ENCODE measurements at regions of chr10 and their contacts with region 1.

Region 1: DNA sequence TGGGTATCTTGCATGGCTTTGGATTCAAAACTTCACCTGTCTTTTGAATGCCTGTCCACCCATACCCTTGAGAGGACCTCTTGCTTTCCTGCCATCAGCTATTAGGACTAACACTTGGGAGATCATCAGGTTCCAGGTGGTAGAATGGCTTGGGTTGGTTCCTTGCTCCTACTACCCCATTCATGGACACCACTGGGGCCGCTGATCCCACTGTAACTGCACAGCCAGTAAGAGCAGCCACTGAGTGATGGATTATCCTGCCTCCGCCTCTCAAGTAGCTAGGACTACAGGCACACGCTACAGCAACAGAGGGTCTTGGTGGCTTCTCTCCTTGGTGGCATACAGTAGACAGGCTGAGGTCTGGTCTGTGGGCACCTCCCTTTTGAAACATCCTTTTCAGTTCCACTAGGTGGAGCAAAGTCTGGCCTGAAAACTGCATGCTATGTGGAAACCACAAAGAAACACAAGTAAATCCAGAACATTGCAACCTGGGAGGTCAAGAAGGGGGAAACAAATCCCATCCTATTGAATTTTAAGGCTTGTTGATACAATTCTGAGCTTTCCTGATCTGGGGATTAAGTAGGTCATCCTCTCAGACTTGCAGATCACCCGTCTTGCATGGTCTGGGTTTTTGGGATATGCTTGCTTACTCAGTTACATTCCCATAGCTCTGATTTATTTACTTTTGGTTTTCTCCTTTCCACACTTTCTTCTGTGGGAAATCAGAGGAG is 9.4 kb downstream of the WBP1L start:
- DNase-seq: peak; percentile 19
- ATAC-seq: peak; percentile 95
- H3K4me3 ChIP-seq: no peak overlapping the region
- H3K27ac ChIP-seq: no peak overlapping the region
- H3K4me1 ChIP-seq: peaks cover 11% of the 10 kb centered on the region
- H3K27me3 ChIP-seq: no peaks in the 10 kb centered on the region
- CTCF ChIP-seq: peak; percentile 54 to 63 (median 57); a peak in 5 of 6 replicates
- EP300 ChIP-seq: no peak
- POLR2A ChIP-seq: no peak
- RAD21 ChIP-seq: peak; percentile 71

Region 2: GRCh38 chr10:102024799-102025198 is 728.3 kb before region 1 on chr10:
- CTCF ChIA-PET with region 1: no interaction called
- POLR2A ChIA-PET with region 1: no interaction called
- RAD21 ChIA-PET with region 1: no interaction called
- SMC1A ChIA-PET with region 1: no interaction called
- in situ Hi-C with region 1: no loop called
- intact Hi-C with region 1: no loop called
- DNase-seq: no peak
- ATAC-seq: no peak
- H3K4me3 ChIP-seq: no peak overlapping the region
- H3K27ac ChIP-seq: no peak overlapping the region
- H3K4me1 ChIP-seq: no peaks in the 10 kb centered on the region
- H3K27me3 ChIP-seq: no peaks in the 10 kb centered on the region
- CTCF ChIP-seq: no peak
- EP300 ChIP-seq: no peak
- POLR2A ChIP-seq: no peak
- RAD21 ChIP-seq: no peak

Region 3: GRCh38 chr10:102132563-102133372 is 620.3 kb before region 1 on chr10 and contains the start of gene PPRC1:
- CTCF ChIA-PET with region 1: no interaction called
- POLR2A ChIA-PET with region 1: no interaction called
- RAD21 ChIA-PET with region 1: no interaction called
- SMC1A ChIA-PET with region 1: no interaction called
- in situ Hi-C with region 1: no loop called
- intact Hi-C with region 1: no loop called
- DNase-seq: peak; percentile 97
- ATAC-seq: peak; percentile 95
- H3K4me3 ChIP-seq: peak within 1 kb of the TSS; percentile 93
- H3K27ac ChIP-seq: peak within 1 kb of the TSS; percentile 75
- H3K4me1 ChIP-seq: peaks cover 10% of the 10 kb centered on the region
- H3K27me3 ChIP-seq: no peaks in the 10 kb centered on the region
- CTCF ChIP-seq: peak; percentile 87 to 98 (median 88)
- EP300 ChIP-seq: 0 out of 4 replicates have a peak, but pooled peaks of 1 of the 2 experiments have one; percentile 18
- POLR2A ChIP-seq: peak; percentile 91
- RAD21 ChIP-seq: peak; percentile 69
- polyA plus RNA-seq, gene PPRC1: 13.1 to 15.2 TPM

Region 4: DNA sequence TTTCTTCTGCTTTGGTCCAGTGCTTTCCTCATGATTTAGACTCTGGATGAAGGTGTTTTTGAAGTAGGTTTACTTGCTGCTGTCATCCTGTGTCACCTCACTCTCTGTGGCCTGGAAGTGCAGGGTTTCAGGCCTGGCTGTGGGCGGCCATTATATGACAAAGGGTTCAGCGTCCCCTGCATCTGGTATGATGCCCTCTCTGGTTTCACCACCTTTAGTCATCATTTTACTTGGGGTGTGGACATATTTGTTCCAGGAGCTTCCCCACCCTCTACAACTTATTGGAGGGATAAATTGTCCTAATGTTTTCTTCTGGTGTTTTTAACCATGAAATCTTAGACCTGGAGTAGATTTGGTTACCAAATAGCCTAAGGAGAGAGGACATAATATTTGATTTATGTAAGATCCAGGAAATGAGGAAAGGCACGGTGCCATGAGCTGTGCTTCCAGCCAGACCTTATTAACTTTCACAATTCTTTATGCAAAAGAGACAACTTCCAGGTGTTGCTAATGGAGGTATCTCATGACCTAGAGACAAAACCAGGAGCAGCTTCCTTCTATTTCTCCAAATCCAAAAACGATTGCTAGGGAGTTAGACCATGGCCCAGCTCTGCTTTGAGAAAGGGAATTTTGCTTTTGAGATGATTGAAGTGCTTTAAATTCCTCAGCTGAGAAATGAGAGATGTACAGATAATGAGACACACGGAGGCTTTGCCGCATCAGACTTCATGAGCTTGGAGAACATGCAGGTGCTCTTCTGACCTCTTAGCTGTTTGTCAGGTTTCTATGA is 11.5 kb after region 1 on chr10:
- CTCF ChIA-PET with region 1: interaction called, 32 read pairs
- POLR2A ChIA-PET with region 1: interaction called, 4 read pairs
- RAD21 ChIA-PET with region 1: interaction called, 3 read pairs
- SMC1A ChIA-PET with region 1: interaction called, 9 read pairs
- in situ Hi-C with region 1: no loop called
- intact Hi-C with region 1: no loop called
- DNase-seq: no peak
- ATAC-seq: no peak
- H3K4me3 ChIP-seq: no peak overlapping the region
- H3K27ac ChIP-seq: no peak overlapping the region
- H3K4me1 ChIP-seq: peaks cover 9% of the 10 kb centered on the region
- H3K27me3 ChIP-seq: no peaks in the 10 kb centered on the region
- CTCF ChIP-seq: no peak
- EP300 ChIP-seq: no peak
- POLR2A ChIP-seq: no peak
- RAD21 ChIP-seq: no peak

Region 5: DNA sequence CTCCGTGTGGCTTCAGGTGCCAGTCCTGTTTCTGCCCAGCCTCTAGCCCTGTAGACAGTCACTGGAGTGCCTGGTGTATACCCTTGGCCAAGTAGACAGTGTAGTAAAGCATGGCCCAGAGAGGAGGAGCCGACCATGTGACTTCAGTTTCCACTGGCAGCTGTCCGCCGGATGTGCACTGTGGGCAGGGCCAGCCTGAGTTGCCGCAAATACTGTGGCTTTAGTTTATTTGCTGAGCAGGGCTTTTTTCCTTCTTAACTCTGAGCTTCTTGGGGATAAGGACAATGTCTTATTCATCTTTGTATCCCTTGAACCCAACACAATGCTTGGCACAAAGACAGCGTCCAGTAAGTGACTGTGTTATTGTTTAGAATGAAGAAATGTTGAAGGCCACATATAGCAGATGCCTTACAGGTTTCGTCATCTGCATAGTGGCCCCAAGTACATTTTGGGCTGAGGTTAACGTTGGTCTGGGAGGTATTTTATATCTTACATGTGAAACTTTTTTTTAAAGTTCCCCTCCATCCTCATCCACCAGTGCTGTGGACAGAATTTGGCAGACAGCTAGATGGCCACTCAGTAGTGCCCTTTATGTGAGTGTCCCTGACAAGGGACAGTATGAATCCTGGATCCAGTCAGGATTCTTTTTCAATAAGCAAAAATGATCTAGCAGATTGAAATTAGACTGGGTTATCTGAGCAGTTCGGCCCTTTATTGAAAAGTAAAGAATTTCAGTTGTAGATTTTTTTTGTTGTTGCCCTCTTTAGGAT is 43.5 kb after region 1 on chr10:
- CTCF ChIA-PET with region 1: interaction called, 4 read pairs
- POLR2A ChIA-PET with region 1: no interaction called
- RAD21 ChIA-PET with region 1: no interaction called
- SMC1A ChIA-PET with region 1: interaction called, 3 read pairs
- in situ Hi-C with region 1: no loop called
- intact Hi-C with region 1: loop called (anchors 5 kb)
- DNase-seq: peak; percentile 49
- ATAC-seq: peak; percentile 100
- H3K4me3 ChIP-seq: peak overlapping the region; percentile 30; the same call in 1 of the 2 replicates
- H3K27ac ChIP-seq: peak overlapping the region; percentile 87
- H3K4me1 ChIP-seq: peaks cover 18% of the 10 kb centered on the region
- H3K27me3 ChIP-seq: no peaks in the 10 kb centered on the region
- CTCF ChIP-seq: no peak
- EP300 ChIP-seq: peak in 1 of 2 experiments; percentile 45; a peak in 1 of 4 replicates
- POLR2A ChIP-seq: peak; percentile 75
- RAD21 ChIP-seq: no peak

Region 6: GRCh38 chr10:102802920-102803534 is 49.9 kb after region 1 on chr10:
- CTCF ChIA-PET with region 1: interaction called, 16 read pairs
- POLR2A ChIA-PET with region 1: no interaction called
- RAD21 ChIA-PET with region 1: no interaction called
- SMC1A ChIA-PET with region 1: interaction called, 5 read pairs
- in situ Hi-C with region 1: no loop called
- intact Hi-C with region 1: loop called (anchors 5 kb)
- DNase-seq: peak; percentile 38
- ATAC-seq: peak; percentile 92
- H3K4me3 ChIP-seq: no peak overlapping the region
- H3K27ac ChIP-seq: peak overlapping the region; percentile 63
- H3K4me1 ChIP-seq: peaks cover 17% of the 10 kb centered on the region
- H3K27me3 ChIP-seq: no peaks in the 10 kb centered on the region
- CTCF ChIP-seq: no peak
- EP300 ChIP-seq: 0 out of 4 replicates have a peak, but pooled peaks of 1 of the 2 experiments have one; percentile 14
- POLR2A ChIP-seq: no peak
- RAD21 ChIP-seq: no peak

Region 7: DNA sequence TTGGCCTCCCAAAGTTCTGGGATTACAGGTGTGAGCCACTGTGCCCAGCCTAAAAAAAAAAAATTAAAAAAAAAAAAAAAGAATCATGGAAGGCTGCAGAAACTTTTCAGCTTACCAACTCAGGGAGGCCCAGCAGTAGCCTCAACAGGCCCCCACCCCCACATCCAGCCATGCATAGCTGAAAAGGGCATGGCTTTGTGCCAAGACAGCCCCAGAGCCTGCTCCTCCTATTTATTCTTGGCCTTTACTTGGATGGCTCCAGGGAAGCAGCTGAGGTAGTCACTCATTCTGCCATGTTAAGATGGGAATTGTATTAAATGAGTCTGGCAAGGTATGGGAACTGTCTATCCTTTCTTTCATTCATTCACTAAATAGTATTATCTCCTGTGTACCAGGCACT is 151.2 kb after region 1 on chr10:
- CTCF ChIA-PET with region 1: interaction called, 21 read pairs
- POLR2A ChIA-PET with region 1: no interaction called
- RAD21 ChIA-PET with region 1: interaction called, 11 read pairs
- SMC1A ChIA-PET with region 1: interaction called, 9 read pairs
- in situ Hi-C with region 1: no loop called
- intact Hi-C with region 1: no loop called
- DNase-seq: no peak
- ATAC-seq: no peak
- H3K4me3 ChIP-seq: no peak overlapping the region
- H3K27ac ChIP-seq: no peak overlapping the region
- H3K4me1 ChIP-seq: no peaks in the 10 kb centered on the region
- H3K27me3 ChIP-seq: no peaks in the 10 kb centered on the region
- CTCF ChIP-seq: no peak
- EP300 ChIP-seq: no peak
- POLR2A ChIP-seq: no peak
- RAD21 ChIP-seq: no peak

Region 8: GRCh38 chr10:103080891-103081581 is 327.9 kb after region 1 on chr10:
- CTCF ChIA-PET with region 1: no interaction called
- POLR2A ChIA-PET with region 1: no interaction called
- RAD21 ChIA-PET with region 1: no interaction called
- SMC1A ChIA-PET with region 1: no interaction called
- in situ Hi-C with region 1: no loop called
- intact Hi-C with region 1: no loop called
- DNase-seq: no peak
- ATAC-seq: peak; percentile 33; the same call in 1 of the 3 replicates
- H3K4me3 ChIP-seq: no peak overlapping the region
- H3K27ac ChIP-seq: no peak overlapping the region
- H3K4me1 ChIP-seq: no peaks in the 10 kb centered on the region
- H3K27me3 ChIP-seq: no peaks in the 10 kb centered on the region
- CTCF ChIP-seq: no peak
- EP300 ChIP-seq: no peak
- POLR2A ChIP-seq: no peak; the same call in 1 of the 2 replicates
- RAD21 ChIP-seq: no peak